Dendritic cell treated with granulocyte-macrophage colony-stimulating factor and Interleukin-4, amounts not matched to agents 40 ng/mL and 50 ng/mL, for 4 days (primary cell): ENCODE measurements at regions of chr1 and their contacts with region 1.

Region 1: DNA sequence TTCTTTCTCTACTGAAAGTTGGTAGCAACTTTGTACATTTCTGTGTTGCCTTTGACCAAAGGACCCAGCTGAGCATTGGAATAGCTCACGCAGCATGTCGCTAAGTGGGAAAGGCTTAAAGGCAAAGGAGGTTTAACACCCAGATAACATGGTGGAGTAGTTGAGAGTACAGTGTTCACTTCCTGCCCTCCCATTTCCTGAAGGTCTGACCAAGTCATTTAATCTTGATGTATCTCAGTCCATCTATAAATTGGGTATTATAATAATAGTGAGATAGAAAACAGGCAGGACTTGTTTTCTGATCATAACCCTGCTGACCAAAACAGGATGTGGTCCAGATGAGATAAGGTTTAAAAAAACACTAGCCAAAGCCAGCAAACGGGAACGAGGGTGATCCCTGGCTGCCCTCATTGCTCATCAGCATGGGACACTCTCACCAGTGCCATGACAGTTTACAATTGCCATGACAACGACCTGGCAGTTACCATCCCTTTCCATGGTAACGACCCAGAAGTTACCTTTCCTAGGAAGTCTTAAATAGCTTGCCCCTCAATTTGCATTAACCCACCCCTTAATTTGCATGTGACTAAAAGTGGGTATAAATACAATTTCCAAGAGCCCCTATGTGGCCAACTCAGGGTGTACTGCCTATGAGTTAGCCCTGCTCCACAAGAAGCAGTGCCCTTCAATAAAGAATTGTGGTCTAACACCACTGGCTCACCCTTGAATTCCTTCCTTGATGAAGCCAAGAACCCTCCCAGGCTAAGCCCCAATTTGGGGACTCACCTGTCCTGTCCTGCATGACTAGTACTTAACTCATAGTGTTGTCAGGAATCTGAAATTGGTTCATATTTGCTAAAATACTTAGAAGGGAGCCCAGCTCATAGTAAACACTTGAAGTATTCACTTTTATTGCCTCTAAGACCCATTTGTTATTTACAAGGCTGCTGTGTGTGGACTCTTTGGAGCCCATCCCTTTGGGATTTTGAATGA is 28.4 kb upstream of the FHAD1 start:
- H3K4me3 Mint-ChIP-seq: no peak overlapping the region
- H3K27ac Mint-ChIP-seq: no peak overlapping the region
- H3K4me1 Mint-ChIP-seq: peaks cover 89% of the 10 kb centered on the region
- H3K27me3 Mint-ChIP-seq: no peaks in the 10 kb centered on the region

Region 2: DNA sequence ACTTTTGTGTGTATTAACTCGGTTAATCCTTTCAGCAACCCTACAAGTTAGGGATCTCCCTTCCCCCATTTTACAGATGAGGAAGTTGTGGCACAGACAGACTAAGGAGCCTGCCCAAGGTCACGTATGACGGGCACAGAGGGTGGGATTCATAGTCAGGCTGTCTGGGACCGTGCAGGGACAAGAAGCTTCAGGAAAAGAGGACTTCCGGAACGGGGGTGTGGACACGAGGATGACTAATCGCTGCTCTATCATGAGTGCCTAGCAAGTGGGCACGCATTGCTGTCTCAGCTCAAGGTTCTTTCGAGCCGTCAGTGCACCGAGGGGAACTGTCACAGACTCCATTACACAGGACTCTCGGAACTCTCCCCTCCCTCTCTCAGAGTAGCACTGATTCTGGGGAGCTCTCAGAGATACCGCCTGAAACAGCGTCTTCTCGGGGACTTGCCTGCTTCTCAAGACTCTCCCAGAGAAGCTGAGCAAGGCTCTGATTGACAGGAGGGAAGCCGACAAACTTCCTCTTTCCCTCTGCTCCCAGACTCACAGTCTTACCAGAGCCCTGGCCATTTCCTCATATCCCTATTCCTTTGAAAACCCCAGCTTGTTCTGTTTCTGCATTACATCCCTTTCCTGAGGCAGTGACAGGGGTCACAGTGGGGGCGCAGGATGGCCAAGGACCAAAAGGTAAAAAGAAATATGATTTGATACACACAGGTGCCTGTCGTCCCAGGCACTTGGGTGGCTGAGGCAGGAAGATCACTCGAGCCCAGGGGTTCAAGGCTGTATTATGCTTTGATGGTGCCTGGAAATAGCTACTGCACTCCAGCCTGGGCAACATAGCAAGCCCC is 42.8 kb after region 1 on chr1:
- intact Hi-C with region 1: loop called (anchors 5 kb)
- H3K4me3 Mint-ChIP-seq: peak overlapping the region; percentile 61
- H3K27ac Mint-ChIP-seq: peak overlapping the region; percentile 96
- H3K4me1 Mint-ChIP-seq: peaks cover 85% of the 10 kb centered on the region
- H3K27me3 Mint-ChIP-seq: no peaks in the 10 kb centered on the region

Region 3: GRCh38 chr1:15272009-15272788 is 53.6 kb after region 1 on chr1:
- intact Hi-C with region 1: loop called (anchors 5 kb)
- H3K4me3 Mint-ChIP-seq: peak overlapping the region; percentile 32
- H3K27ac Mint-ChIP-seq: peak overlapping the region; percentile 22
- H3K4me1 Mint-ChIP-seq: peaks cover 43% of the 10 kb centered on the region
- H3K27me3 Mint-ChIP-seq: no peaks in the 10 kb centered on the region